ENCODE measurements at regions of chr13 and their contacts with region 1.

Region 1: DNA sequence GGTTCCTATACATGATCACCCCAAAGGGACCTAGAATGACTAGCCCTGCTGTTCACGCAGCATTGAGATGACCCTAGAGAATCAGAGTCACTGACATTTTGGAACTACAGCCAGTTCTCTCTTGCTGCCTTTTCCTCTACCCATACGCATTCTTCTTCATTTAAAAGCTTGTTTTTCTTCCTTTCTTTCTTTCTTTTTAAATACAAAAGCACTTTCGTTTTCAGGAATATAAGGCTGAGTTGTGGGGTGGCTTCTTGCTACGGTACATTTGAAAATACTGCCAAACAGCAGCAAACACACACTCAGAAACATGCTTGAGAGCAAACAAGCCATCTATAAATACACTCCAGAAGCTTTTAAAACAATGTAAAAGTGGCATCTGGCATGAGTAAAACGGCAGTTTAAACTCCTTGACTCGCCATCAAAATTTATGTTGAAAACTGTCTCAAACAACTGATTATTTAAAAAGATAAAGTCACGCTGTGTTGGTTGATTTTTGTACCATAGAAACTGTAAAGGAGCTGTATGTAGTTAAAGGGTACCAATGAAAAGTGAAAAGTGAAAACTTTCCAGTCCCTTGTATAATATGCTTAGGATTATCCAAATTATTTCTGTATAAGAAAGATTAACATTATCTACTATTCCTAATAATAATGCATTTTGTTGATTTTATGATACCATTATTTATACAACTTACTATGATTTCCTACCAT is 95.6 kb downstream of the PCDH9 start:
- DNase-seq: peak; percentile 59
- H3K4me3 ChIP-seq: peak overlapping the region in 2 of 3 experiments; percentile 18 to 73
- H3K27ac ChIP-seq: peak overlapping the region; percentile 35
- H3K4me1 ChIP-seq: peaks cover 16% of the 10 kb centered on the region
- H3K27me3 ChIP-seq: no peaks in the 10 kb centered on the region
- CTCF ChIP-seq: no peak
- POLR2A ChIP-seq: no peak

Region 2: DNA sequence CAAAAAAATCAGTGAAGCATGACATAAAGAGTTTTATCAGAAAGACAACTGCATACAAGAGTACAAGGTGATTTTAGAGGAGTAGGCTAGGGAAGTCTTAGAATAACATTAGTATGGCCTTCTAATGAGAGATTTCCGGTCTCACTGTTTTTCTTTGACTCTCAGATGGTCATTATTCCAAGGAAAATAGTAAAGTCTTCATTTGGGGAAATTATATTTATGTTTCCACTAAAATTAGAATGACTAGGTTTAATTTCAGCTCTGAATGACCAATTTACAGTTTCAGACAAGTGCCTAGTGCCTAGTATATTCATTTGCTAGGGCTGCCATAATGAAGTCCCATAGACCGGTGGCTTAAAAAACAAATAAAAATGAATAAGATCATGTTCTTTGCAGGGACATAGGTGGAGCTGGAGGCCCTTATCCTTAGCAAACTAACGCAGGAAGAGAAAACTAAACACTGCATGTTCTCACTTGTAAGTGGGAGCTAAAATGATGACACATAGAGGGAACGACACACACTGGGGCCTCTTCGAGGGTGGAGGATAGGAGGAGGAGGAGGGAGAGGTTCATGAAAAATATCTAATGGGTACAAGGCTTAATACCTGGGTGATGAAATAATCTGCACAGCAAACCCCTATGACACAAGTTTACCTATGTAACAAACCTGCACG is 207.6 kb before region 1 on chr13:
- CTCF ChIA-PET with region 1: no interaction called
- POLR2A ChIA-PET with region 1: no interaction called
- dilution Hi-C with region 1: no loop called
- intact Hi-C with region 1: loop called (anchors 5 kb)
- DNase-seq: peak; percentile 66
- H3K4me3 ChIP-seq: no peak overlapping the region
- H3K27ac ChIP-seq: no peak overlapping the region
- H3K4me1 ChIP-seq: peaks cover 13% of the 10 kb centered on the region
- H3K27me3 ChIP-seq: no peaks in the 10 kb centered on the region
- CTCF ChIP-seq: no peak
- POLR2A ChIP-seq: no peak